ENCODE measurements at regions of chr16 and their contacts with region 1.

Region 1: GRCh38 chr16:89330177-89330856 is 112.8 kb downstream of the ZNF778 start:
- DNase-seq: no peak
- H3K4me3 ChIP-seq: no peak overlapping the region
- H3K27ac ChIP-seq: peak overlapping the region in 3 of 4 donors; percentile 23 to 51 (median 46)
- H3K4me1 ChIP-seq: peaks cover 0 to 67% (median 62%) of the 10 kb centered on the region in 4 donors
- H3K27me3 ChIP-seq: no peaks in the 10 kb centered on the region
- CTCF ChIP-seq: no peak
- EP300 ChIP-seq: no peak
- POLR2A ChIP-seq: no peak

Region 2: DNA sequence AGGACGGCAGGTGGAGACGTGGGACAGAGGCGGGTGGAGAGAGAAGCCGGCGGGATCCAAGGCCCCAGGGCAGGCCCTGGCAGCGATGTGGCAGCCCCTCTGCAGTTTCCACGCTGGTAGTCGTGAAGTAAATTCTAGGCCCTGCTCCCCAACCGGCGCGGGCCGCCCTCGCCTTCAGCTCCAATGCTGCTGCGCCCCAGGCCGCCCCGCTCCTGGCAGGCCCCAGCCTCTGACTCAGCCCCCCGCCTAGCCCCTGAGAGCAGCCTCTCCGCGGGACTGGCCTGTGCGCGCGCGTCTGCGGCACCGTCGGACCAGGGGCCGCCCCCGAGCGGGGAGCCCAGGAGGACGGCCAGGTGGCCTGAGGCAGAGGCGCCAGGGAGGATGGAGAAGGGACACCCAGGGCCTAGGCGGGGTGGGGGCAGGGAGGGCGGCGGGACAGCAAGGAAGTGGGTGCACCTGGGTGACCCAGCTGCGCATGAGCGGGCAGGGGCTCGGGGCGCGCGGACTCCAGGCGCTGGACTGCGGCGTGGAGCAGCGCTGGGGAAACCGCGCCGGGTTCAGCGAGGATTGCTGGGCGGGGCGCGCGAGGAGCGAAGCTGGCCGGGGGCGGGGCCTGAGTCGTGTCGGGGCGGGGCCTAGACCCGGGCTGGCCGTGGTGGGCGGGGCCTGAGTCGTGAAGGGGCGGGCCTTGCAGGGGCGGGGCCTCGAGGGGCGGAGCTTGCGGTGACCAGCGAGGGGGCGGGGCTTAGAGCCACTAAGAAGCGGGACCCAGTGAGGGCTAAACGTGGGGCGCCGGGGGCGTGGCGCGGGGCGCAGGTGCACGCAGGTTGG is 83.2 kb before region 1 on chr16:
- intact Hi-C with region 1: no loop called
- DNase-seq: peak; percentile 95
- H3K4me3 ChIP-seq: peak overlapping the region; percentile 40 to 60 (median 52)
- H3K27ac ChIP-seq: peak overlapping the region; percentile 34 to 57 (median 50)
- H3K4me1 ChIP-seq: peaks cover 0 to 18% (median 10%) of the 10 kb centered on the region in 4 donors
- H3K27me3 ChIP-seq: peaks cover 0 to 5% (median 0%) of the 10 kb centered on the region in 3 donors
- CTCF ChIP-seq: no peak
- EP300 ChIP-seq: no peak
- POLR2A ChIP-seq: no peak

Region 3: DNA sequence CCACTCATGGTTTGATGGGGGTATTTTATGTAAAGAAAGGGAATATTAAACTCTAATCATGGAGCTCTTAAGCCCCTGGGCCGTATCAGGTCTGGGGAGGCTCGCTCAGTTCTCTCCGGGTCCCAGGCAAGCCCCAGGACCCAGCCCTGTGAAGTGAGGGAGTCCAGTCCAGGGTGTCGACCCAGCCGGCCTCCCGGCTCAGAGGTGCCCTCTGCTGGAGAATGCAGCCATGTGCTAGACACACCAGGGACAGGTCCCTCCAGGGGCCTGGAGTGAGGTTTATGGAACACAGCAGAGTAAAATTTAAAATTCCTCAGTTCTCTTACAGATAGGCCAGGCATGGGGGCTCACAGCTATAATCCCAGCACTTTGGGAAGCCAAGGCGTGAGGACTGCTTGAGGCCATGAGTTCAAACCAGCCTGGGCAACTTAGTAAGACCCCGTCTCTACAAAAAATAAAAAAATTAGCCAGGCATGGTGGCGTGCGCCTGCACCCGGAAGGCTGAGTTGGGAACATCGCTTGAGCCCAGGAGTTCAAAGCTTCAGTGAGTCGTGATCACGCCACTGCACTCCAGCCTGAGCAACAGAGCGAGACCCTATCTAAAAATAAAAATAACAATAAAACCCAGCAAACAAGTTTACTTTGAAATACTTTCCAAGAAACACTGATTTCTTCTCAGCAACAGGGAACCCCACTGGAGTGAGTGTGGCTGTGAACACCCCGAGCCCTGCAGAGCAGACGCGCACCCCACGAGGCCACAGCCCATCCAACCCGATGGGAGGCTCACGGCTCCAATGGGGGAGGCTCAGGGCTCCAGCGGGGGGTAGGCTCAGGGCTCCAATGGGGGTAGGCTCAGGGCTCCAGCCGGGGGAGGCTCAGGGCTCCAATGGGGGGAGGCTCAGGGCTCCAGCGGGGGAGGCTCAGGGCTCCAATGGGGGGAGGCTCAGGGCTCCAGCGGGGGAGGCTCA is 40.6 kb before region 1 on chr16:
- intact Hi-C with region 1: no loop called
- DNase-seq: peak; percentile 84
- H3K4me3 ChIP-seq: no peak overlapping the region
- H3K27ac ChIP-seq: peak overlapping the region in 2 of 4 donors; percentile 2 to 22
- H3K4me1 ChIP-seq: peaks cover 0 to 22% (median 15%) of the 10 kb centered on the region in 4 donors
- H3K27me3 ChIP-seq: no peaks in the 10 kb centered on the region
- CTCF ChIP-seq: peak; percentile 64 to 85 (median 68)
- EP300 ChIP-seq: no peak
- POLR2A ChIP-seq: no peak

Region 4: GRCh38 chr16:89371968-89372634 is 41.8 kb after region 1 on chr16:
- intact Hi-C with region 1: loop called (anchors 1 kb)
- DNase-seq: no peak
- H3K4me3 ChIP-seq: no peak overlapping the region
- H3K27ac ChIP-seq: peak overlapping the region in 2 of 4 donors; percentile 19 to 61
- H3K4me1 ChIP-seq: peaks cover 0 to 72% (median 56%) of the 10 kb centered on the region in 4 donors
- H3K27me3 ChIP-seq: no peaks in the 10 kb centered on the region
- CTCF ChIP-seq: no peak
- EP300 ChIP-seq: no peak
- POLR2A ChIP-seq: no peak

Region 5: GRCh38 chr16:89490387-89491237 is 160.3 kb after region 1 on chr16 and contains the start of gene ANKRD11:
- intact Hi-C with region 1: loop called (anchors 5 kb)
- DNase-seq: peak; percentile 100
- H3K4me3 ChIP-seq: peak within 1 kb of the TSS; percentile 69 to 98 (median 95)
- H3K27ac ChIP-seq: peak within 1 kb of the TSS; percentile 95 to 100 (median 98)
- H3K4me1 ChIP-seq: peaks cover 0 to 48% (median 42%) of the 10 kb centered on the region in 4 donors
- H3K27me3 ChIP-seq: no peaks in the 10 kb centered on the region
- CTCF ChIP-seq: no peak
- EP300 ChIP-seq: no peak
- POLR2A ChIP-seq: peak; percentile 37 to 44
- total RNA-seq, gene ANKRD11: 42.6 to 161 (median 48.8) TPM

Region 6: GRCh38 chr16:89507834-89508590 is 177.7 kb after region 1 on chr16 and contains the start of gene SPG7:
- intact Hi-C with region 1: loop called (anchors 2 kb)
- DNase-seq: peak; percentile 90
- H3K4me3 ChIP-seq: peak within 1 kb of the TSS; percentile 68 to 90 (median 74)
- H3K27ac ChIP-seq: peak within 1 kb of the TSS; percentile 89 to 96 (median 93)
- H3K4me1 ChIP-seq: peaks cover 0 to 38% (median 32%) of the 10 kb centered on the region in 4 donors
- H3K27me3 ChIP-seq: no peaks in the 10 kb centered on the region
- CTCF ChIP-seq: no peak
- EP300 ChIP-seq: no peak
- POLR2A ChIP-seq: peak; percentile 46 to 58
- total RNA-seq, gene SPG7: 69.4 to 211 (median 113) TPM

Region 7: GRCh38 chr16:89525146-89525913 is 195.0 kb after region 1 on chr16:
- intact Hi-C with region 1: no loop called
- DNase-seq: no peak
- H3K4me3 ChIP-seq: no peak overlapping the region
- H3K27ac ChIP-seq: no peak overlapping the region
- H3K4me1 ChIP-seq: no peaks in the 10 kb centered on the region
- H3K27me3 ChIP-seq: no peaks in the 10 kb centered on the region
- CTCF ChIP-seq: no peak
- EP300 ChIP-seq: no peak
- POLR2A ChIP-seq: no peak